Activated naive CD4-positive, alpha-beta T cell treated with anti-CD3 and anti-CD28 coated beads, Interleukin-2, amount 10 ng/mL, durations not matched to agents 7 days and 5 days (primary cell): ENCODE measurements at regions of chr1 and their contacts with region 1.

Region 1: DNA sequence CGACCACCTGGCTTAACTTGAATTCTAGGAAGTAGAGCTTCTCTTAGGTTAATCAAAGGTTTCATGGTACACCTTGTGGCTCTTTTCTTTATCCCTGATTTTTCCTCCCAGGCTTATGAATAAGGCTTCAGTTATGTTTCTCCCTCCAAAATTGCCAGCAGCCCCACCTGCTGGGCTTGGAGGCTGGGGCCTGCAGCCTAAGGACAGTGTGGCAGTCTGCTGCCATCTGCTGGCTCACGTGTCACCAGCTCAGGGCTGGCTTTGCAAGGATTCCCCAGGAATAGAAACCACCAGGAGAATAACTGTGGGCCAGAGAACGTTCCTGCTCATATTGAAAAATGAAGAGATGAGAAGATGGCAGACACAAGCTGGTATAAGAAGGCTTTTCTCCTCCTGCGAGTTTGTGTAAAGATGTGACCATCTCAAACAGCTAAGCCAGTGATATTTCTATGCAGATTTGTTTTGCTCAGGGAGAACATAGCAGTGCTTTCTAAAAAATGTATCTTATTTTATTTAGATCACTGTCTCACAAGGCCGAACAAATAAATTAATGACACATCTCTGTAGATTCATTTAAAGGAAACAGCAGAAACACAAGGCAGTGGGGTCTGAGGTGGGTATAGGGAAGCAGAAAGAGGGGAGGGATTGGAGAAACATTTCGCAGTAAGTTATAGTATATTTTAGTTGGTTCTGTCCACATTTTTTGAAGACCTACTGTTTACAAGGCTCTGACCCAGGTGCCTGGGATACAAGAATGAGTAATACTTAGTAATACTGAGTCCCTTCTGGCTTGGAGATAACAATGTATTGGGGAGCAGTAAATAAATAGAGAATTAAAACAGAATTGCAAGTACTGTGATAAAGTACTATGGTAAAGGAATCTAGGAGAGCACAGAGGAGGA is 291.1 kb upstream of the SGIP1 start:
- DNase-seq: peak; percentile 85
- H3K4me3 Mint-ChIP-seq: no peak overlapping the region
- H3K27ac Mint-ChIP-seq: no peak overlapping the region
- H3K4me1 Mint-ChIP-seq: peaks cover 3% of the 10 kb centered on the region
- H3K27me3 Mint-ChIP-seq: peaks cover 6% of the 10 kb centered on the region

Region 2: DNA sequence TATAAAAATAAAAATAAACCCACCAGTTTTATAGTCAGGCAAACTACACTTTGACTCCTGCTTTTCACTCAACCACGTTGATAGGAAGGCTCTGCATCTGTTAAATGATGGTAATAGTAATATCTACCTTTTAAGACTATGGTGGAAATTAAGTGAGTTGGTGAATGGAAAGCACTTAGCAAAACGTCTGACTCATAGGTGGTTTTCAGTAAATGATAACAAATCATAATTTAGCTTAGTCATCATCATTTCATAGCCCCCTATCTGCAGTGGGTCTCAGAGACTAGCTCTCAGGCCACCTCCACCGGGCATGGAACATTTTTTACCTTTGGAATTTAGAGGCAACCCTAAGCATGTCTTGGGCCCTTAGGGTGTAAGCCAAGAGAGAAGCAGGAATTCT is 290.2 kb before region 1 on chr1:
- CTCF ChIA-PET with region 1: interaction called, 306 read pairs
- DNase-seq: no peak
- H3K4me3 Mint-ChIP-seq: no peak overlapping the region
- H3K27ac Mint-ChIP-seq: no peak overlapping the region
- H3K4me1 Mint-ChIP-seq: no peaks in the 10 kb centered on the region
- H3K27me3 Mint-ChIP-seq: no peaks in the 10 kb centered on the region

Region 3: DNA sequence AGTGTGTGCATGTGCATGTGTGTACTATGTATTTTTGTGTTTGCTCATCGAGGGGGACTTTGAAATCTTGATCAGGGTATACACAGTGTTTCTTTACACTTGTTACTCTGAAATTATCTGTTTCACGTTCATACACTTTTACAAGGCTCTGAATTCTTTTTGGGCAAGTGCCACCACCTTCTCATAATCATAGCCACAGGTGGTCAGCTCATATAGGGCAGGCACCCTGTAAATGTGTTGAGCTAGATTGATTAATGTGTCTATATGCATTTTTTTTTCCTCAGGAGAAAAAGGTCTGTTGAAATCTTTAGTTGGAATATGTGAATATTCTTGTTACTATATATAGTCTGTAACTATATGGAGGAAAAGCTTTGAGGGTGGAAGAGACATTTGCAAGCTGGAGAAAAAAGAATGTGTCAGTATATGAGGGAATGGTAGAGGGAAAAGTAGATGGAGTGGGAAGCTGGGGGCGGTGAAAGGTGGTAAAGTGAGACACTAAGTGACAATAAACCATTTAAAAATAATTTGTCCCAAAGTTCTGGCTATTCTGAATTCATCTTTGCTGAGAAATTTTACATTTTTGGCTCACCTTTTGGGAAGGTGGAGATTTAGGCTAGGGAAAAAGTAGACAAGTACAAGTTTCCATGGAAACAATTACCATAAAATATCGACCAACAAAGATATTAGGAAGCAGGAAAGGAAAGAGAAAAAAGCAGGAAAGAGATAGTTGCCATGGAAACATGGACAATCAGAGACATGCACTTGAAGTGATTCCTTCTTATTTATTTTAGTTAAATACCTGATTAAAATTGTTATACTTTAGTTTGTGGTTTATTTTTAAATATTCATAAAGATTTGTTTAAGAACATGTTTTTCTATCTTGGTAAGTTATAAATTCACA is 172.7 kb before region 1 on chr1:
- CTCF ChIA-PET with region 1: interaction called, 12 read pairs
- DNase-seq: no peak
- H3K4me3 Mint-ChIP-seq: no peak overlapping the region
- H3K27ac Mint-ChIP-seq: no peak overlapping the region
- H3K4me1 Mint-ChIP-seq: no peaks in the 10 kb centered on the region
- H3K27me3 Mint-ChIP-seq: peaks cover 4% of the 10 kb centered on the region

Region 4: DNA sequence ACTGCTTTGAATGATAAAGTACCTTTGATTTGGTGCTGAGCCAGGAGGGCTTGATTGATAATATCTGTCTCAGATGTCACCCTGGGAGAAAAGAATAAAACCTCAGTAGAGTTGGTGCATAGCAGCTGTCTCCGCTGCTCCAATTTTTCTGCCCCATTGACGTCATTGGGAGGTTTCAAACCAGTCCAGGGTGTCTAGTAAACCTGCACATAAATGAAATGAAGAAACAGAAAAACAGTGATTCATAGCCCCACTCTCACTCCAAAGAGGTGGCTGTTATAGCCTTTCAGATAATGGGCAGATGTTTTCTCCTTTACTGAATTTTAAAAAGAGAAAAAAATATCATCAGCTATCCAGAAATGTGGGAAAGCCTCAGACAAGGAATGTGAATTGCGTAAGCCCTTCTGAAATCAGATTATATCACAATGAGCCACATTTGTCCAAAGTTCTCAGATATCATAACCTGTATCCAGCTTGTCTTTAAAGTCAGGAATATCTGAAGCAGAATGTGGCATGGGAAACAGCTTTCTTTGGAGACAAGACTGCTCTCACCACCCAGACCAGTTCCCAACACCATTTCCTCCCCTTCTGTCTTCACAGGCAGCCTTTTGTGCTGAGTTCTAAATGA is 60.2 kb before region 1 on chr1:
- CTCF ChIA-PET with region 1: interaction called, 16 read pairs
- DNase-seq: peak; percentile 68
- H3K4me3 Mint-ChIP-seq: peak overlapping the region; percentile 33
- H3K27ac Mint-ChIP-seq: peak overlapping the region; percentile 83
- H3K4me1 Mint-ChIP-seq: peaks cover 40% of the 10 kb centered on the region
- H3K27me3 Mint-ChIP-seq: no peaks in the 10 kb centered on the region

Region 5: DNA sequence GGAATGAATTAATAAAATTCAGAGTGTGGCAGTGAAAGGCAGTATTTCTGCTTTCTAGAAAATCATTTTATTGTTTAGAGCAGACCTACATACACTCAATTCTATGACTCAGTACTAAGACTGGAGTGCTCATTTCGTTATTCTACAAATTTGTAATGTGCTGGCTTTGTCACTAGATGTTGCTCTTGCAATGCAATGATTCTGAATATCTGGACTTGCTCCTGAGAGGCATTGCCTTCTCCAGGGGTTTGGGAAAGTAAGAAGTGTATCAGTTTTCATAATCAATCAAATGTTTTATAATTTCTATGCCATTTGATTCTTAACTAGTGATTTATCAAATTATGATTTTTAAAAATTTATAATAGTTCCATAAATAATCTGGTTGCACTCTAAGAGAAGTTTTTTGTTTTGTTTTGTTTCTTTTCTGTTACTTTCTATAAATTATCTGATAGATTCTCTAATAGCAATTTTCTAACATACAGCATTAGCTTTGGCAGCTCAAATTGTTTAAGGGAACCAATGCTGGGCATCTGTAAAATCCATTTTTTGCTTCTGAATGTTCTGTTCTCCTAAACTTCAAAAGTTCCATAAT is 10.5 kb after region 1 on chr1:
- CTCF ChIA-PET with region 1: interaction called, 36 read pairs
- DNase-seq: no peak
- H3K4me3 Mint-ChIP-seq: no peak overlapping the region
- H3K27ac Mint-ChIP-seq: no peak overlapping the region
- H3K4me1 Mint-ChIP-seq: peaks cover 58% of the 10 kb centered on the region
- H3K27me3 Mint-ChIP-seq: no peaks in the 10 kb centered on the region

Region 6: GRCh38 chr1:66503841-66504470 is 261.1 kb after region 1 on chr1:
- CTCF ChIA-PET with region 1: interaction called, 28 read pairs
- DNase-seq: peak; percentile 49
- H3K4me3 Mint-ChIP-seq: no peak overlapping the region
- H3K27ac Mint-ChIP-seq: no peak overlapping the region
- H3K4me1 Mint-ChIP-seq: no peaks in the 10 kb centered on the region
- H3K27me3 Mint-ChIP-seq: peaks cover 15% of the 10 kb centered on the region

Region 7: GRCh38 chr1:66633159-66633558 is 390.3 kb after region 1 on chr1:
- CTCF ChIA-PET with region 1: no interaction called
- DNase-seq: no peak
- H3K4me3 Mint-ChIP-seq: no peak overlapping the region
- H3K27ac Mint-ChIP-seq: no peak overlapping the region
- H3K4me1 Mint-ChIP-seq: no peaks in the 10 kb centered on the region
- H3K27me3 Mint-ChIP-seq: peaks cover 5% of the 10 kb centered on the region